Activated CD8-positive, alpha-beta T cell treated with anti-CD3 and anti-CD28 coated beads for 36 hours (primary cell): ENCODE measurements at regions of chr2 and their contacts with region 1.

Region 1: GRCh38 chr2:70132244-70133126 is 45.2 kb downstream of the PCBP1 start:
- DNase-seq: peak; percentile 65
- ATAC-seq: peak; percentile 46
- H3K4me3 Mint-ChIP-seq: peak overlapping the region; percentile 86
- H3K27ac Mint-ChIP-seq: peak overlapping the region; percentile 99
- H3K4me1 Mint-ChIP-seq: peaks cover 61% of the 10 kb centered on the region
- H3K27me3 Mint-ChIP-seq: no peaks in the 10 kb centered on the region
- CTCF ChIP-seq: no peak

Region 2: DNA sequence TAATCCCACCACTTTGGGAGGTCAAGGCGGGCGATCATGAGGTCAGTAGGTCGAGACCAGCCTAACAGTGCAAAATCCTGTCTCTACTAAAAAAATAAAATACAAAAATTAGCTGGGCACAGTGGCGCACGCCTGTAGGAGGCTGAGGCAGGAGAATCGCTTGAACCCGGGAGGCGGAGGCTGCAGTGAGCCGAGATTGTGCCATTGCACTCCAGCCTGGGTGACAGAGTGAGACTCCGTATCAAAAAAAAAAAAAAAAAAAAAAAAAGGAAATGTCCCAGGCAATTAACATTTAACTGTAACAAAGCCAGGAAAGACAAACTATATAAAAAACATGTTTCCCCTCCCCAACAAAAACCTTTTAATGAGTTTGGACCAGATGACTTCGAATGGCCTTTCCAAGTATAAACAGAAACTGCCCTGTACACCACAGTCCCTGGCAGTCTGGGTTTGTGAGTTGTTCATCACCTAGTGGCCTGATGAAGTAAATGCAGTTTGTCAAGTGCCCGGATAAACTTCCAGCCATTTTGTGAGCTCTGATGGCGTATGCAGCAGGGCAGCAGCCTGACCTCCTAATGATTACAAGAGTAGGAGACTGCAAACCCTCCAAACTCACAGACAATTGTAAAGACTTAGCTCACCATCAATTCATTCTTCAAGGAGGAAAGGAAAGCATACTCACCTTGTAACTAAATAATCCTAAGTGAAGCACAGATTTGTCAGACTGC is 61.8 kb before region 1 on chr2:
- CTCF ChIA-PET with region 1: interaction called, 15 read pairs
- POLR2A ChIA-PET with region 1: interaction called, 955 read pairs
- intact Hi-C with region 1: no loop called
- DNase-seq: peak; percentile 74
- ATAC-seq: peak; percentile 72
- H3K4me3 Mint-ChIP-seq: peak overlapping the region; percentile 40
- H3K27ac Mint-ChIP-seq: peak overlapping the region; percentile 87
- H3K4me1 Mint-ChIP-seq: peaks cover 44% of the 10 kb centered on the region
- H3K27me3 Mint-ChIP-seq: no peaks in the 10 kb centered on the region
- CTCF ChIP-seq: peak; percentile 67

Region 3: GRCh38 chr2:70086838-70087701 is 45.4 kb before region 1 on chr2 and contains the start of gene PCBP1:
- CTCF ChIA-PET with region 1: interaction called, 215 read pairs
- POLR2A ChIA-PET with region 1: interaction called, 955 read pairs
- intact Hi-C with region 1: loop called (anchors 2 kb)
- DNase-seq: peak; percentile 96
- ATAC-seq: peak; percentile 60
- H3K4me3 Mint-ChIP-seq: peak within 1 kb of the TSS; percentile 99
- H3K27ac Mint-ChIP-seq: peak within 1 kb of the TSS; percentile 98
- H3K4me1 Mint-ChIP-seq: peaks cover 53% of the 10 kb centered on the region
- H3K27me3 Mint-ChIP-seq: no peaks in the 10 kb centered on the region
- CTCF ChIP-seq: no peak
- total RNA-seq, gene PCBP1: 470 to 489 TPM

Region 4: DNA sequence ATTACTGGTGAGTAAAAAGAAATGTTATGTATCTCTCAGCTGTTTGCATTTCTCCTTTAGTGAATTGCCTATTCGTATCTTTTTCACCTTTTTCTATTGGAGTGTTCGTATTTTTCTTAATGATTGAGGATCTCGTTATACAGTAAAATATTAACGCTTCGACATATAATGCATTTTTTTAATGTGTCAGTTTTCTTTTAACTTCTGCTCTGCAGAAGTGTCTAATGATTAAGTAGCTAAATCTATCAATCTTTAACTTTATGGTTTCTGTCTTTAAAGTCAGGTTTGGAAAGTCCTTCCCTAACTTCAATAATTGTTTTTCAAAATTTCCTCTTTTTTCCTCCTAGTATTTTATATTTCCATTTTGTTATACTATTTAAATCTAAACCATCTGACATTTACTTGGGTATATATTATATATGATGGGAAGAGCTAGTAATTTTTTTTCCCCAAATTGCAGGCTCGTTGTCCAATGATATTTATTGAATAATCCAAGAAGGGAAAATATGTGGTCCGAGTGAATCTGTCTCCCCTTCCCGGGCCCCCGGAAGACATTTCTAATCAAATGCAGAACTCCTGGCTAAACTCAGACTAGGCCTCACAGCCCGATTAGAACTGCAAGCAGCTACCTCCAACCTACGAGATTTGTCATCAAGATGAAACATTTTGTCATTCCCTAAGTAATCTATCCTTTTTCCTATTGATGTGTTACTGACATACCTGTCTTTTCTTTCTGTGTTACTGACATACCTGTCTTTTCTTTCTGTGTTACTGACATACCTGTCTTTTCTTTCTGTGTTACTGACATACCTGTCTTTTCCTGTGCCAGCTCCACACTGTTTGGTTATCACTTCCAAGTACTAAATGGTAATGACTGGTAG is 28.0 kb before region 1 on chr2:
- CTCF ChIA-PET with region 1: interaction called, 11 read pairs
- POLR2A ChIA-PET with region 1: interaction called, 33 read pairs
- intact Hi-C with region 1: no loop called
- DNase-seq: peak; percentile 79
- ATAC-seq: no peak
- H3K4me3 Mint-ChIP-seq: peak overlapping the region; percentile 77
- H3K27ac Mint-ChIP-seq: peak overlapping the region; percentile 95
- H3K4me1 Mint-ChIP-seq: peaks cover 58% of the 10 kb centered on the region
- H3K27me3 Mint-ChIP-seq: no peaks in the 10 kb centered on the region
- CTCF ChIP-seq: no peak

Region 5: DNA sequence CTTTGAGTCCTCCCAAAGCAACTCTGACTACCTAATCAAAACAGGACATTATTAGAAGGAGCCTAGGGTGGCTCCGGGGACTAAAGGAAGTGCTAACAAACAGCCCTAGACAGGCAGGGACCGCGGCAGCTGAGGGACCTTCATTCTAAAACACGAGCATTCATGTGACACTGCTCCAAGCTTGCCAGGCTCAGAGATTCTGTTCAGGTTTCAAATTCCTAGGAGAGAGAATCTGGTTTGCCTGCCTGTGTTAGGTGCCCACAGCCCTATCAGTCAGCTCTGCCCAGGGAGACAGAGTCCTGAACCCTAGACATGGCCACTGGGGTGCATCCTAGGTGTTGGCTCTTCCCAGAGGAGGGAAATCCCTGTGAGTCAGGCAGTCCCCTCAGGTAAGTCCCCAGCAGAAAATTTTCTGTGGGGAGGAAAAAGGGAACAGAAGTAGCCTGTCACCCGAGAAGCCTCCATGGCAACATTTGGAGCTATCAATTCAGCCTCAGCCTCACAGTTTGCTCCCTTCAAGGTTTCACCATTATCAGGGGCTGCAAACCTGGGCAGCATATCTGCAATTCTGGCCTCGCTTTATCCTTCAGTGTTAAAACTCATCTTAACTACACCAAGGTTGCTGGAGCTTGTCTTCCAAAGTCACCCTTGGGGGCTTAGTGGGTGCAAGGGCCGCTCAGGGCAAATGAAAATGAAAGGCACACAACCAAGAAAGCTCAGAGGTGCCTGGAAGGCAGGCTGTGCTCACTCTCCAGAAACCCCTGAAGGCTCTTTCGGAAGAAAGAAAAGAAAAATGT is 16.6 kb before region 1 on chr2:
- CTCF ChIA-PET with region 1: interaction called, 5 read pairs
- POLR2A ChIA-PET with region 1: interaction called, 123 read pairs
- intact Hi-C with region 1: no loop called
- DNase-seq: peak; percentile 46
- ATAC-seq: peak; percentile 57
- H3K4me3 Mint-ChIP-seq: peak overlapping the region; percentile 7
- H3K27ac Mint-ChIP-seq: peak overlapping the region; percentile 61
- H3K4me1 Mint-ChIP-seq: peaks cover 54% of the 10 kb centered on the region
- H3K27me3 Mint-ChIP-seq: no peaks in the 10 kb centered on the region
- CTCF ChIP-seq: no peak